ENCODE measurements at regions of chr19 and their contacts with region 1.

Region 1: DNA sequence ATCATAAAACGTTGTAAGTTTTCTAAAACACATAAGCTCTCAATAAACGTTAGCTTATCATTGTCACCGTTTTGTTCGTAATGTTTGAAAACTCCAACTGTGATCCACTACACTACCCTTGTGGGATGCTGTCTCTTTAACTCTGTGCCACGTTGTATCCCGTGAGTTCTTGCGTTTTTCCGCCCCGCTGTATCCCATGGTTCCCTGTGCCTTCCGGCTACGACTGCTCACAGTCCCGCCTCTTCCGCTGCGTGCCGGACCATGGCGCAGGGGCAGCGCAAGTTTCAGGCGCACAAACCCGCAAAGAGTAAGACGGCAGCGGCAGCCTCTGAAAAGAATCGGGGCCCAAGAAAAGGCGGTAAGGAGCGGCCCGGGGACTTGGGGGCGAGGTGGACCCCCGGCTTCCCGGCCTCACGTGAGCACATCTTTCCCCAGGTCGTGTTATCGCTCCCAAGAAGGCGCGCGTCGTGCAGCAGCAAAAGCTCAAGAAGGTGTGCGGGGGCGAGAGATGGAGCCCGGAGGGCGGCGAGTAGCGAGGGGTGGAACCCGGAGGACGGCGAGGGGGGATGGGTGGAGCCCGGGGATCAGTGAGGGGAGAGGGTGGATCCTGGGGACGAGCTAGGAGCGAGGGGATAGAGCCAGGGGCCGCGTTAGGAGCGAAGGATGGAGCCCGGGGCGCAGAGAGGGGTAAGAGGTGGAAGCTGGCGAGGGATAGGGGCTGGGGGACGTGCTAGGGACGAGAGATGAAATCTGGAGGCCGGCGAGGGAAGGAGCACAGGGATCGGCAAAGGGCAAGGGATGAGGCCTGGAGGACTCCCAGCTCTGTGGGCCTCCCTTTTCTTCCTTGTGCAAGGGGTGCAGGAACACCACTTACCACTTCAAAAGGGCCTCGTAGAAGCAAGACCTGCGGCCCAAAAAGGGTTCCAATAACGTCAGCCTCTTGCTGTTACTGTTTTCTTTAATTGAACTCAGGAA is at the start of gene C19orf53:
- DNase-seq: peak; percentile 77 to 94
- ATAC-seq: peak; percentile 99 to 100 (median 99)
- H3K4me3 ChIP-seq: peak within 1 kb of the TSS; percentile 63
- H3K4me3 Mint-ChIP-seq: peak within 1 kb of the TSS; percentile 100
- H3K27ac ChIP-seq: peak within 1 kb of the TSS; percentile 63
- H3K27ac Mint-ChIP-seq: peak within 1 kb of the TSS; percentile 93 to 95
- H3K4me1 ChIP-seq: peaks cover 14% of the 10 kb centered on the region
- H3K4me1 Mint-ChIP-seq: peaks cover 19 to 28% of the 10 kb centered on the region in 2 donors
- H3K27me3 ChIP-seq: no peaks in the 10 kb centered on the region
- H3K27me3 Mint-ChIP-seq: no peaks in the 10 kb centered on the region
- CTCF ChIP-seq: no peak
- total RNA-seq, gene C19orf53: 52.2 to 56.6 (median 54.7) TPM

Region 2: DNA sequence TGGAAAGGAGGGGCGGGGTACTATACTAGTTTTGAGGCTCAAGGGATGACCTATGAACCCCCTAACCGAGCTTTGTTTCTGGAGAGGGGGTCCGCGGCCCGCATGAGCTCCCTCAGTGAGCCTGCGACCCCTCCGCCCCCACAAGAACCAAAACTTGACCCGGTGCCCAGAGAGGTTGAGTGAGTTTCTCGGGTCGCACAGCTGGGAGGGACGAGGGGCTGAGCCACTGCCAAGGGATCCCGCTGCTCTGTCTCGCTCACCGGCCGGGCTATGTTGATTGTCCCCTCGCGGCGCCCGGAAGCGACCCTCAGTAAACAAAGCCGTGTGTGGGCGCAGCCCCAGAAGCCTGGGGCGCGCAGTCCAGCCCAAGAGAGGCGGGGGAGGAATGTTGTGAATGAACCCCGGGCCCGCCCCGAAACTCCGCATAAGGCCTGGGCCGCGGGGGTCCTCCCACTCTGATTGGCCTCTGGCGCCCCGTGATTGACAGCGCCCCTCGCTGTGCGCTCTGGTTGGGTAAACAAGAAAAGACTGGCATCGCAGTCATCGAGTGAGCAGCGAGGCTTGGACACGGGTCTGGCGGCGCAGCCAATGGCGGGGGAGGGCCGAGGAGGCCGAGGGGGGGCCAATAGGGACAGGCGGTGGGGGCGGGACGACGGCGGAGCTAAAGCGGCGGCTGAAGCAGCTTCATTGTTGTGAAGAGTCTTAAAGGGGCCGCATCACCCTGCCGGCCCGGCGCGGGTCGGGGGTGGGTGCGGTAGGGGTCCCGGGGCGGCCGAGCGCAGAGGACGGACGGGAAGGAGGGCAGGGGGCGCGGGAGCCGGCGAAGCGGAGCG is 20.5 kb after region 1 on chr19 and contains the start of gene ZSWIM4:
- intact Hi-C with region 1: loop called (anchors 1 kb)
- DNase-seq: peak; percentile 90 to 92
- ATAC-seq: peak; percentile 88 to 96 (median 91)
- H3K4me3 ChIP-seq: peak within 1 kb of the TSS; percentile 69
- H3K4me3 Mint-ChIP-seq: peak within 1 kb of the TSS; percentile 94
- H3K27ac ChIP-seq: peak within 1 kb of the TSS; percentile 68
- H3K27ac Mint-ChIP-seq: peak within 1 kb of the TSS; percentile 87 to 98
- H3K4me1 ChIP-seq: peaks cover 32% of the 10 kb centered on the region
- H3K4me1 Mint-ChIP-seq: peaks cover 26 to 36% of the 10 kb centered on the region in 2 donors
- H3K27me3 ChIP-seq: no peaks in the 10 kb centered on the region
- H3K27me3 Mint-ChIP-seq: no peaks in the 10 kb centered on the region
- CTCF ChIP-seq: no peak
- total RNA-seq, gene ZSWIM4: 5.8 to 5.9 (median 5.9) TPM

Region 3: DNA sequence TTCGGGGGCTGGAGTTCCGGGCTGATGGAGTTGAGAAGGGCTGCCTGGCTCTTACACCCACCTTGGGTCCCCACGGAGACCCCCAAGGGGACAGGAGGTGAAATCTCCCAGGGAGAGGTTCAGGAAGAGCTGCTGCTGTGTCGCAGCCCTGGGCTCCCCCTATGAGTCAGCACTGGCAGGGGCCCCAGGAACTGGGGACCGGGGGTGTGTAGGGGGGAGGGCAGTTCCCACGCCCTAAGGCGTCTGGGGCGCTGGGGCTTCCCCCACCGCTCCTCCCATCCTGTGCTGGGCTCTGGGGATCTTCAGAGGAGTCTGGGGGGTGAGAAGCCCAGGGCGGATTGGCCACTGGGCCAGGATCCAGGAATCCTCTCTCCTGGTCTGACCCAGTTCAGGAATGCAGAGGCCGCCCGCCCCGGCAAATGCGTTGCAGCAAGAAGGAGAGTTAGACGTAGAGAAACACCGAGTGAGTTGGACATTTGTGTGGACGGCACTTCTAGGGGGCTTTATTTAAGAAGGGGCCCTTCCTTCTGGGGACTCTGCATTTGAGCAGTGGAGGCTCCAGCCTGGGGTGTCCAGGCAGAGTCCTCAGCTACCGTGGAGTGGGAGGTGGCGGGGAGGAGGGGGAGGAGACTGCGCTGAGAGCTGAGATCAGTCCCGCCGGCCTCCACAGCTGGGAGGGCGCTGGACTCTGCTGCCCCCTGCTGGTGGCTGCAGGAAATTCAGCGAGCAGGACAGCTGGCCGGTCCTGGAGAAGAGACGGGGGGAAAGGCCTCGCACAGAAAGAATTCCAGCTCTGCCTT is 87.4 kb after region 1 on chr19:
- intact Hi-C with region 1: no loop called
- DNase-seq: peak; percentile 93 to 95
- ATAC-seq: peak; percentile 84 to 96 (median 87)
- H3K4me3 ChIP-seq: peak overlapping the region; percentile 59
- H3K4me3 Mint-ChIP-seq: peak overlapping the region; percentile 96
- H3K27ac ChIP-seq: peak overlapping the region; percentile 99
- H3K27ac Mint-ChIP-seq: peak overlapping the region; percentile 97 to 100
- H3K4me1 ChIP-seq: peaks cover 34% of the 10 kb centered on the region
- H3K4me1 Mint-ChIP-seq: peaks cover 24 to 44% of the 10 kb centered on the region in 2 donors
- H3K27me3 ChIP-seq: peaks cover 21% of the 10 kb centered on the region
- H3K27me3 Mint-ChIP-seq: peaks cover 17 to 24% of the 10 kb centered on the region in 2 donors
- CTCF ChIP-seq: peak; percentile 98

Measured in natural killer cell (primary cell).